ENCODE measurements at regions of chr7 and their contacts with region 1.

Region 1: GRCh38 chr7:140010194-140010895 is 52.4 kb downstream of the PARP12 start:
- DNase-seq: no peak
- H3K4me3 ChIP-seq: no peak overlapping the region
- H3K27ac ChIP-seq: no peak overlapping the region
- H3K4me1 ChIP-seq: no peaks in the 10 kb centered on the region
- H3K27me3 ChIP-seq: no peaks in the 10 kb centered on the region
- CTCF ChIP-seq: no peak

Region 2: DNA sequence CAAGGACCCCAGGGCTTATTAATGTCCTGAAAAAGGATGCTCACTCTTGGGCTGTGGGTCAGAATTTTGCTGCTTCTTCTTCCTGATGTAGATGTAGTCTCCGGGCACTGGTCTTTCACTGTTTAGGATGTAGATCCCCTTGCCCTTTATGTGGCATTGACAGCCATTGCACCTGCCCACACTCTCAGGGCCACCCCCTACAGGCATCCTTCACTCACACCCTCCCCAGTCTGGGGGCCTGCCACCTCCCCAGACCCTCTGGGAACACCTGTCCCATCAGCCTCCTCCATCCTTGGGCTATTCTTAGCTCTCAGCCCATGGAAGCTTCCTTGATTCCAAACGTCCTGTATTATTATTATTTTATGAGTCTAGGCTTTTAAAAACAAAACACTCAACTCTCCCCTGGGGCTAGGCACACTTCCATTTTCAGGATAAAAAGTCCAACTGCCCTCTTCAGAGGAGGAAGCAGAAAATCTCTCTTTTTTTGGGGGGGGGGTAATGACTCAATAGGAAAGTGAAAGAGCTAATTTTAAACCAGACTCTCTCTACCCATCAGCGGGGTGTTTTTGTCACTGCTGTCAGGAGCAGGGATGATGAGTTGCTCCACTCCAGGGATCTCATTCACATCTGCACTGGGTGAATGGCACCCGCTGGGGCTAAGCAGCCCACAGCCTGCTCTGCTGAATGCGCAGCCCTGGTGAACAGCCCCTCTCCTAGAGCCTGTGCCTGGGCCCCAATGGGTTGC is 515.3 kb before region 1 on chr7:
- CTCF ChIA-PET with region 1: no interaction called
- dilution Hi-C with region 1: loop called (anchors 5 kb)
- in situ Hi-C with region 1: loop called (anchors 10 kb)
- intact Hi-C with region 1: no loop called
- DNase-seq: no peak
- H3K4me3 ChIP-seq: no peak overlapping the region
- H3K27ac ChIP-seq: no peak overlapping the region
- H3K4me1 ChIP-seq: peaks cover 4% of the 10 kb centered on the region
- H3K27me3 ChIP-seq: no peaks in the 10 kb centered on the region
- CTCF ChIP-seq: no peak

Measured in mammary epithelial cell (primary cell).